PC-3 (cell line): ENCODE measurements at regions of chr18 and their contacts with region 1.

Region 1: GRCh38 chr18:21330122-21330701 is 88.2 kb downstream of the GREB1L start:
- DNase-seq: peak; percentile 93
- ATAC-seq: peak; percentile 91
- H3K4me3 ChIP-seq: peak overlapping the region; percentile 34; the same call in 1 of the 2 replicates
- H3K27ac ChIP-seq: peak overlapping the region; percentile 95
- H3K4me1 ChIP-seq: peaks cover 59% of the 10 kb centered on the region
- H3K27me3 ChIP-seq: no peaks in the 10 kb centered on the region
- CTCF ChIP-seq: no peak

Region 2: GRCh38 chr18:21257386-21257785 is 72.8 kb before region 1 on chr18:
- CTCF ChIA-PET with region 1: no interaction called
- POLR2A ChIA-PET with region 1: no interaction called
- intact Hi-C with region 1: loop called (anchors 10 kb)
- DNase-seq: peak; percentile 26
- ATAC-seq: peak; percentile 45
- H3K4me3 ChIP-seq: no peak overlapping the region
- H3K27ac ChIP-seq: no peak overlapping the region
- H3K4me1 ChIP-seq: peaks cover 4% of the 10 kb centered on the region; the same call in 1 of the 2 replicates
- H3K27me3 ChIP-seq: no peaks in the 10 kb centered on the region
- CTCF ChIP-seq: no peak

Region 3: DNA sequence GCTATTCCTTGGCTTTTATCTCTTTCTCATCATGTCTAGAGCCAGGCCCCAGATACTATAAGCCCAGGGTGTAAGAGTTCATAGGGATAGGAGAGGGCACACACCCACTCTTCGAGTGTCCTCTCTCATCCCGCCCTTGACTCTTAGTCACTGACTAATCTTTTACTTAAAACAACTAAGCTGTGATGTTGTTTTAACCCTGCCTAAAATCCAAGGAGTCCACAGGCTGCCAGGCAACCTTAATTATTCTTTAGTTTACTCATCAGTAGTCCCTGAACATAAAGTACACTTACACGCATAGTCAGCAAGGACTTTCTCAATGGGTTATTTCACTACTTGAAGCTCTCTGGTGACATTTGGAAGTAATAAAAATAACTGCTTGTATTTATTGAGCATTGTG is 59.8 kb before region 1 on chr18:
- CTCF ChIA-PET with region 1: no interaction called
- POLR2A ChIA-PET with region 1: no interaction called
- intact Hi-C with region 1: no loop called
- DNase-seq: no peak
- ATAC-seq: no peak
- H3K4me3 ChIP-seq: no peak overlapping the region
- H3K27ac ChIP-seq: no peak overlapping the region
- H3K4me1 ChIP-seq: no peaks in the 10 kb centered on the region
- H3K27me3 ChIP-seq: no peaks in the 10 kb centered on the region
- CTCF ChIP-seq: no peak

Region 4: GRCh38 chr18:21289827-21290226 is 40.4 kb before region 1 on chr18:
- CTCF ChIA-PET with region 1: no interaction called
- POLR2A ChIA-PET with region 1: interaction called, 5 read pairs
- intact Hi-C with region 1: loop called (anchors 2 kb)
- DNase-seq: no peak
- ATAC-seq: no peak; the same call in 1 of the 2 replicates
- H3K4me3 ChIP-seq: no peak overlapping the region
- H3K27ac ChIP-seq: no peak overlapping the region
- H3K4me1 ChIP-seq: peaks cover 13% of the 10 kb centered on the region
- H3K27me3 ChIP-seq: no peaks in the 10 kb centered on the region
- CTCF ChIP-seq: no peak

Region 5: GRCh38 chr18:21315741-21316187 is 14.4 kb before region 1 on chr18:
- CTCF ChIA-PET with region 1: no interaction called
- POLR2A ChIA-PET with region 1: no interaction called
- intact Hi-C with region 1: loop called (anchors 2 kb)
- DNase-seq: no peak
- ATAC-seq: no peak
- H3K4me3 ChIP-seq: no peak overlapping the region
- H3K27ac ChIP-seq: no peak overlapping the region
- H3K4me1 ChIP-seq: peaks cover 15% of the 10 kb centered on the region
- H3K27me3 ChIP-seq: no peaks in the 10 kb centered on the region
- CTCF ChIP-seq: no peak

Region 6: DNA sequence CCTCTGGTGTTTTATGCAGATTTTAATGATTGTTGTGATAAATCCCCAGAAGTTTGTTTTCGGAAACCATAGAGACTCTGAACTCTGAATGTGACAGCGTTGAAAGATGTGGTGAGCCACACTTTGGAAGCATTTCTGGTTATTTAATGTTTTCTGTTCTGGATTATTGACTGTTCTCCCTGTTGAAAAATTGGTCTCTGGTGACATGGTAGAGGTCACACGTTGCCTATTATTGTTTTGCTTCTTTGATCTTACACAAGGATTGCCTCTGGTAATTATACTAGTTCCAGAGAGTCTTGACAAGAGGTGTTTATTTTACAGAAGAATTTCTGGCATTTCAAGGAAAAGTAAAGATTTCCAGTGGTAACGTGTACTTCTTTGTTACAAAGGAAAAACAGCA is 38.9 kb after region 1 on chr18:
- CTCF ChIA-PET with region 1: no interaction called
- POLR2A ChIA-PET with region 1: no interaction called
- intact Hi-C with region 1: loop called (anchors 1 kb)
- DNase-seq: no peak
- ATAC-seq: peak; percentile 15; the same call in 1 of the 2 replicates
- H3K4me3 ChIP-seq: no peak overlapping the region
- H3K27ac ChIP-seq: 0 out of 2 replicates have a peak overlapping the region, but pooled peaks have one; percentile 26
- H3K4me1 ChIP-seq: peaks cover 12% of the 10 kb centered on the region
- H3K27me3 ChIP-seq: no peaks in the 10 kb centered on the region
- CTCF ChIP-seq: no peak

Region 7: DNA sequence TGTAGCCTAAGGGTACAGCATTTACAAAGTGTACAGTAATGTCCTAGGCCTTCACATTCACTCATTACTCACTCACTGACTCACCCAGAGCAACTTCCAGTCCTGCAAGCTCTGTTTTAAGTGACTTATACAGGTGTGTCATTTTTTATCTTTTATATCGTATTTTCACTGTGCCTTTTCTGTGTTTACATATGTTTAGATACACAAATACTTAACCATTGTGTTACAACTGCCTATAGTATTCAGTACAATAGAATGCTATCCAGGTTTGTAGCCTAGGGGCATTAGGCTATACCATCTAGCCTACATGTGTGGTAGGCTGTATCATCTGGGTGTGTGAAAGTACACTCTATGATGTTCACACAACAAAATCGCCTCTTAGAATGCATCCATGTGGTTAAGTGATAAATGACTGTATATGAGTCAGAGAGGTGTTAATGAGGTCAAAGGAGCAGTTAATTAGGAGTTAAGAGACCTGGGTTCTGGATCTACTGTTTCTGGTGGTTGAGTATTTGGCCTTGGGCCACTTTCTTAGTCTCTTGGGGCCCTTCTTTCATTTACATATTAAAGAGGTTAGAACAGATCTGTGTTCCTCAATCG is 61.0 kb after region 1 on chr18:
- CTCF ChIA-PET with region 1: interaction called, 13 read pairs
- POLR2A ChIA-PET with region 1: no interaction called
- intact Hi-C with region 1: loop called (anchors 1 kb)
- DNase-seq: peak; percentile 99
- ATAC-seq: peak; percentile 86
- H3K4me3 ChIP-seq: peak overlapping the region; percentile 11; the same call in 1 of the 2 replicates
- H3K27ac ChIP-seq: peak overlapping the region; percentile 99
- H3K4me1 ChIP-seq: peaks cover 29% of the 10 kb centered on the region
- H3K27me3 ChIP-seq: no peaks in the 10 kb centered on the region
- CTCF ChIP-seq: no peak

Region 8: DNA sequence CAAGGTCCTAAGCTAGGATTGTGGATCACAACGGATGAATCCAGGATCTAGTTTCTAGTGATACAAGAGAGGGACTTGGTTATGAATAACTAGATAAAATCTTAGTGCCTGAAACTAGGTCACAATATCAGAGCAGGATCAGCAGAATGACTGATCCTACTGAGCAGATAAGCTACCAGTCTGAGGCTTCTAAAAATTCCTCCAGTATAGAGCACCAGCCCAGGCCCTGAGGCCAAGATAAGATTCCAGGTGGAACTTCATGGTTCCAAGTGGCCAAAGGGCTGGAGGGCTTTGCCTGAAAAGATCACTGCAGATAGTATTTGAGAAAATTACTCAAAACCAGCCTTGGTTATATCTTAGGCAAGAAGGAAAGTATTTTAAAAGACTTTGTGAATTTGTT is 74.2 kb after region 1 on chr18:
- CTCF ChIA-PET with region 1: no interaction called
- POLR2A ChIA-PET with region 1: no interaction called
- intact Hi-C with region 1: no loop called
- DNase-seq: no peak
- ATAC-seq: no peak
- H3K4me3 ChIP-seq: no peak overlapping the region
- H3K27ac ChIP-seq: no peak overlapping the region
- H3K4me1 ChIP-seq: no peaks in the 10 kb centered on the region
- H3K27me3 ChIP-seq: no peaks in the 10 kb centered on the region
- CTCF ChIP-seq: no peak

Region 9: GRCh38 chr18:21444465-21445023 is 114.3 kb after region 1 on chr18:
- CTCF ChIA-PET with region 1: no interaction called
- POLR2A ChIA-PET with region 1: no interaction called
- intact Hi-C with region 1: loop called (anchors 2 kb)
- DNase-seq: peak; percentile 78
- ATAC-seq: peak; percentile 78
- H3K4me3 ChIP-seq: no peak overlapping the region
- H3K27ac ChIP-seq: no peak overlapping the region
- H3K4me1 ChIP-seq: peaks cover 14% of the 10 kb centered on the region
- H3K27me3 ChIP-seq: no peaks in the 10 kb centered on the region
- CTCF ChIP-seq: peak; percentile 95

Region 10: GRCh38 chr18:21509062-21509461 is 178.8 kb after region 1 on chr18:
- CTCF ChIA-PET with region 1: no interaction called
- POLR2A ChIA-PET with region 1: no interaction called
- intact Hi-C with region 1: no loop called
- DNase-seq: no peak
- ATAC-seq: peak; percentile 38; the same call in 1 of the 2 replicates
- H3K4me3 ChIP-seq: no peak overlapping the region
- H3K27ac ChIP-seq: no peak overlapping the region
- H3K4me1 ChIP-seq: no peaks in the 10 kb centered on the region
- H3K27me3 ChIP-seq: no peaks in the 10 kb centered on the region
- CTCF ChIP-seq: no peak